ENCODE measurements at regions of chr14 and their contacts with region 1.

Region 1: GRCh38 chr14:60622917-60623257 is 26.4 kb downstream of the SIX1 start:
- DNase-seq: no peak
- H3K4me3 ChIP-seq: no peak overlapping the region
- H3K27ac ChIP-seq: no peak overlapping the region
- H3K4me1 ChIP-seq: no peaks in the 10 kb centered on the region
- H3K27me3 ChIP-seq: no peaks in the 10 kb centered on the region
- CTCF ChIP-seq: no peak

Region 2: DNA sequence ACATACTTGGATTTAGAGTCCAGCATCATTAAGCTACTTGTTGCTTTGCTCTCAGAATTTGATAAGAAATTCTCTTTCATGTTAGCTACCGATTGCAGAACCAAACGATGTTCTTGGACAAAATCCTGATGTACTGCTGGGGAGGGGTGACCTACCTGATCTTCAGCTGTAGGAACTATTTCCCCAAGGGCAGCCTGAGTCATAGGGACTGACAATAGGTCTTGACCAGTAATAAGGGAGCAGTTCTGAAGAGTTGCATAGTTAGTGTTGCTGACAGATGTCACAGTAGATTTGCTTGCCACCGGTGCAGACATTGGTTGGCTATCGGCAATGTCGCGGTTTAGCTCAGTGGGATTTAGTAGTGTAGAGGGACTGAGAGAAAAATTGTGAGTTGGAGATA is 90.6 kb after region 1 on chr14:
- CTCF ChIA-PET with region 1: no interaction called
- POLR2A ChIA-PET with region 1: no interaction called
- intact Hi-C with region 1: loop called (anchors 2 kb)
- DNase-seq: no peak
- H3K4me3 ChIP-seq: no peak overlapping the region
- H3K27ac ChIP-seq: no peak overlapping the region
- H3K4me1 ChIP-seq: 0 out of 2 replicates have a peak, but pooled peaks cover 5% of the 10 kb centered on the region
- H3K27me3 ChIP-seq: no peaks in the 10 kb centered on the region
- CTCF ChIP-seq: no peak

Region 3: GRCh38 chr14:60980811-60981632 is 358.1 kb after region 1 on chr14 and contains the starts of genes SLC38A6 and TRMT5:
- CTCF ChIA-PET with region 1: no interaction called
- POLR2A ChIA-PET with region 1: no interaction called
- intact Hi-C with region 1: loop called (anchors 1 kb)
- DNase-seq: peak; percentile 92 to 95
- H3K4me3 ChIP-seq: peak within 1 kb of the TSS; percentile 99
- H3K27ac ChIP-seq: peak within 1 kb of the TSS; percentile 78
- H3K4me1 ChIP-seq: peaks cover 36% of the 10 kb centered on the region
- H3K27me3 ChIP-seq: no peaks in the 10 kb centered on the region
- CTCF ChIP-seq: no peak
- total RNA-seq, gene SLC38A6: 44.7 and 45.5 TPM in 2 replicates
- total RNA-seq, gene TRMT5: 17.3 and 17.6 TPM in 2 replicates

Region 4: DNA sequence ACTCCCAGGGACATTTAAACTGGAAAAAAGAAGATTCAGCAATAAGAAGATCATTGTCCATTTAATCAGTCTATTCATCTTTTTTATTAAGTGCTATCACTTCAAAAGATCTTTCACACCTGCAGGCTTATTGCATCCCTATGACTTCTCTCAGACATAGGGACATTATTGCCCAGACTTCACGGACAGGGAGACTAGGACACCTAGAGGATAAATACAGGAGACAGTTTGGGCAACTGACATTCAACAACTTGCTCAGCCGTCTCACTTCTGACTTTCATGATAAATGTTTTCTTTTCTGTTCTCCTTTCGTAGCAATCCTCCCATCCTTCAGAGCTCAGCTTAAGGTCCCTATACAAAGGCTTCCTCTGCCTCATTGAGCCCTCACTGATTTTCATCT is 573.9 kb after region 1 on chr14:
- CTCF ChIA-PET with region 1: no interaction called
- POLR2A ChIA-PET with region 1: no interaction called
- intact Hi-C with region 1: loop called (anchors 1 kb)
- DNase-seq: no peak
- H3K4me3 ChIP-seq: no peak overlapping the region
- H3K27ac ChIP-seq: no peak overlapping the region
- H3K4me1 ChIP-seq: no peaks in the 10 kb centered on the region
- H3K27me3 ChIP-seq: no peaks in the 10 kb centered on the region
- CTCF ChIP-seq: peak; percentile 30; the same call in 1 of the 2 replicates